Panc1 (cell line): ENCODE measurements at regions of chr10 and their contacts with region 1.

Region 1: GRCh38 chr10:125187271-125188194 is 27.2 kb upstream of the CTBP2 start:
- DNase-seq: no peak
- ATAC-seq: no peak
- H3K4me3 ChIP-seq: no peak overlapping the region
- H3K27ac ChIP-seq: no peak overlapping the region
- H3K4me1 ChIP-seq: no peaks in the 10 kb centered on the region
- H3K27me3 ChIP-seq: no peaks in the 10 kb centered on the region
- CTCF ChIP-seq: no peak

Region 2: GRCh38 chr10:125000366-125001312 is 186.9 kb before region 1 on chr10:
- CTCF ChIA-PET with region 1: no interaction called
- POLR2A ChIA-PET with region 1: no interaction called
- in situ Hi-C with region 1: no loop called
- intact Hi-C with region 1: no loop called
- DNase-seq: no peak
- ATAC-seq: no peak
- H3K4me3 ChIP-seq: no peak overlapping the region
- H3K27ac ChIP-seq: no peak overlapping the region
- H3K4me1 ChIP-seq: no peaks in the 10 kb centered on the region
- H3K27me3 ChIP-seq: no peaks in the 10 kb centered on the region
- CTCF ChIP-seq: no peak; the same call in 1 of the 2 replicates

Region 3: DNA sequence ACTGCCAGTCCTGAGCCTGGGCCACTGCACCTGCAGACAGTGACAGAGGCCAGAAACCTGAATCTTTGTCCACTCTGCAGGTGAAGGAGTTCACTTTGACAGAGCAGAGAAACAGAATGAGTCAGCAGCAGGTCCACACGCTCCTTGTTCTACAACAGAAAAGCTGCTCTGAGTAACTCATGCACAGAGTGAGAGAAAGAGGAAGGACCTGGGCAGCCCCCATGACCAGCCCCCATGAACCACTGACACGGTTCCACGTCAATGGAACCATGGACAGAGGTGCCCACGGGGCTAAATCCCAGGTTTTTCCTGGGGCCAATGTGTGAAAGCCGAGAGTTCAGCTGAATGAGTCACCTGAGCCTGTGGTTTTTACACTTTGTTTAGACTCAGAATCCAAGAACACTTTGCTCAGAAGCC is 13.6 kb after region 1 on chr10:
- CTCF ChIA-PET with region 1: interaction called, 4 read pairs
- POLR2A ChIA-PET with region 1: interaction called, 14 read pairs
- in situ Hi-C with region 1: no loop called
- intact Hi-C with region 1: no loop called
- DNase-seq: no peak
- ATAC-seq: peak; percentile 51
- H3K4me3 ChIP-seq: no peak overlapping the region
- H3K27ac ChIP-seq: no peak overlapping the region
- H3K4me1 ChIP-seq: 0 out of 2 replicates have a peak, but pooled peaks cover 3% of the 10 kb centered on the region
- H3K27me3 ChIP-seq: no peaks in the 10 kb centered on the region
- CTCF ChIP-seq: no peak

Region 4: DNA sequence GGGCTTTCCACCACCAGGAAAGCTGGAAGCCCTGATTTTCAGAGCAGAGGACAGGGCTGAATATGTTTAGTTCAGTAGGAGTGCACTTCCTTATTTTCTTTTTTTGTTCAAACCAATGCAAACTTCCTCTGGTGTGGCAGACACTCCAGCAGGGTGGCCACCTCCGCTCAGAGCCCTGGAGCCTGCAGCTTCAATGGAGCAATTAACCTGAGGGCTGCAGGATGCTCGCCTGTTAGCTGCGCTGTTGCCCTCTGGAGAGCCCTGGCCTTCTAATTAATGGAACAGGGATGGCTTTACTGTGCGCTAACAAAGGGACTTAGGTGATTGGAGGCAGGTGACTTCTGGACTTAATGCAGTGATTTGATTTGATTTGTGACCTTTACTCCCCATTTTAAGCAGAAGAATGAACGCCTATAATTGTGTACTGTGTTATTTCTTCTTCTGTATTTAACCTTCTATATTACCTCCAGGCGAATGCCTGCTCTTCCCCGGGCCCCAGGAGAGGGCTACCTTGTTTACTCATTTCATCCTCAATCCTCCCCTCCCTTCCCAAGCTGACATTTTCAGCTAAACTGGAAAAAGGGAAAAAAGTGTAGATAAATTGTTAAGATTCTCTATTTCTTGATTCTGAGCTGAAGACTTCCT is 95.8 kb after region 1 on chr10:
- CTCF ChIA-PET with region 1: no interaction called
- POLR2A ChIA-PET with region 1: no interaction called
- in situ Hi-C with region 1: no loop called
- intact Hi-C with region 1: no loop called
- DNase-seq: no peak
- ATAC-seq: no peak
- H3K4me3 ChIP-seq: no peak overlapping the region
- H3K27ac ChIP-seq: no peak overlapping the region
- H3K4me1 ChIP-seq: no peaks in the 10 kb centered on the region; the same call in 1 of the 2 replicates
- H3K27me3 ChIP-seq: peaks cover 17% of the 10 kb centered on the region
- CTCF ChIP-seq: peak; percentile 17; the same call in 1 of the 2 replicates